Calu3 (cell line): ENCODE measurements at regions of chr7 and their contacts with region 1.

Region 1: GRCh38 chr7:106367018-106367420 is 82.2 kb upstream of the NAMPT start:
- DNase-seq: no peak
- H3K4me3 Mint-ChIP-seq: no peak overlapping the region
- H3K27ac Mint-ChIP-seq: no peak overlapping the region
- H3K4me1 Mint-ChIP-seq: peaks cover 28% of the 10 kb centered on the region
- H3K27me3 Mint-ChIP-seq: no peaks in the 10 kb centered on the region
- CTCF ChIP-seq: no peak

Region 2: DNA sequence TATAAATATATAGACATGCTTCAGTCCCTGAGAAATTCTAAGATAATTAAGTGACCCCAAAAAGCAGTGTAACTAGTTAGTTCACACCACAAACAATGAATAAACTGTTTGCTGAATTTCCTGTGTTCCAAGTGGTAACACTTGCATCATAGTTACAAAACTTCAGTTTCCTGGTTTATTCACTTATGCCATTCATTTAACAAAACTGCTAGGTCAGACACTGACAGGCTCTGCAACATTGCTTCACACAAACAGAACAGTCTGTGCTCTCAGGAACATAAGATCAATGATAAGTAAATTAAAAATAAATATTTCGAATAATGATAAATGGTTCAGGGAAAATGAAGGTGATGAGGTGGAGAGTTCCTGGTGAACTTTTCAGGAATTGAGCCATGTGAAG is 51.1 kb after region 1 on chr7:
- CTCF ChIA-PET with region 1: no interaction called
- intact Hi-C with region 1: loop called (anchors 5 kb)
- DNase-seq: peak; percentile 46
- H3K4me3 Mint-ChIP-seq: peak overlapping the region; percentile 29
- H3K27ac Mint-ChIP-seq: peak overlapping the region; percentile 97
- H3K4me1 Mint-ChIP-seq: peaks cover 77% of the 10 kb centered on the region
- H3K27me3 Mint-ChIP-seq: no peaks in the 10 kb centered on the region
- CTCF ChIP-seq: no peak